Mammary epithelial cell (primary cell): ENCODE measurements at regions of chr17 and their contacts with region 1.

Region 1: DNA sequence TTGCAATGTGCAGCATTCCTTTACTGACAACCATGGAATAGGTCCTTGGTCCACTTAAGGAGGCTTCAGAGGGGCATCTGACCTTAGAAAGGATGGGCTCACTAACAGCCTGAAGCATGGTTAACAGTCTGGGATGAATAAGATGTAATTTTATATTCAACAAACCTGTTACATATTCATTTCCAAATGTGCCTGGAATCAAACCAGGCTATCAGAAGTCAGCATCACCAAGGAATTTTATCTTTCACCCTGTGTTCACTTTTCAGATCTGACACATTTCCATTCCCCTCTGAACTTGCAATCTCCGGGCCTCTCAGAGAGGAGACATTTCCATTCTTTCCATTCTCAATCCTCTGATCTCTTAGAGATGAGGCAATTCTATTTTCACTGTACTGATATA is 62.4 kb downstream of the SNX11 start:
- DNase-seq: no peak
- H3K4me3 ChIP-seq: no peak overlapping the region
- H3K27ac ChIP-seq: no peak overlapping the region
- H3K4me1 ChIP-seq: no peaks in the 10 kb centered on the region
- H3K27me3 ChIP-seq: peaks cover 3% of the 10 kb centered on the region
- CTCF ChIP-seq: no peak

Region 2: GRCh38 chr17:48107168-48108132 is 62.5 kb before region 1 on chr17 and contains the start of gene SNX11:
- CTCF ChIA-PET with region 1: no interaction called
- dilution Hi-C with region 1: loop called (anchors 5 kb)
- in situ Hi-C with region 1: no loop called
- intact Hi-C with region 1: no loop called
- DNase-seq: peak; percentile 92
- H3K4me3 ChIP-seq: peak within 1 kb of the TSS; percentile 65 to 91 (median 71)
- H3K27ac ChIP-seq: peak within 1 kb of the TSS; percentile 81
- H3K4me1 ChIP-seq: peaks cover 7% of the 10 kb centered on the region
- H3K27me3 ChIP-seq: no peaks in the 10 kb centered on the region
- CTCF ChIP-seq: peak in 1 of 2 donors; percentile 28
- total RNA-seq, gene SNX11: 20.2 to 25.8 TPM

Region 3: GRCh38 chr17:48241131-48241591 is 71.2 kb after region 1 on chr17:
- CTCF ChIA-PET with region 1: no interaction called
- dilution Hi-C with region 1: no loop called
- in situ Hi-C with region 1: no loop called
- intact Hi-C with region 1: no loop called
- DNase-seq: peak; percentile 56
- H3K4me3 ChIP-seq: no peak overlapping the region
- H3K27ac ChIP-seq: peak overlapping the region; percentile 38
- H3K4me1 ChIP-seq: peaks cover 50% of the 10 kb centered on the region
- H3K27me3 ChIP-seq: no peaks in the 10 kb centered on the region
- CTCF ChIP-seq: no peak

Region 4: GRCh38 chr17:48382989-48383388 is 213.1 kb after region 1 on chr17:
- CTCF ChIA-PET with region 1: no interaction called
- dilution Hi-C with region 1: no loop called
- in situ Hi-C with region 1: no loop called
- intact Hi-C with region 1: no loop called
- DNase-seq: no peak
- H3K4me3 ChIP-seq: no peak overlapping the region
- H3K27ac ChIP-seq: no peak overlapping the region
- H3K4me1 ChIP-seq: no peaks in the 10 kb centered on the region
- H3K27me3 ChIP-seq: peaks cover 6% of the 10 kb centered on the region
- CTCF ChIP-seq: no peak